ENCODE measurements at regions of chr6 and their contacts with region 1.

Region 1: GRCh38 chr6:45714741-45715507 is 300.7 kb downstream of the CLIC5 start:
- DNase-seq: peak; percentile 73
- H3K4me3 Mint-ChIP-seq: no peak overlapping the region
- H3K27ac Mint-ChIP-seq: no peak overlapping the region
- H3K4me1 Mint-ChIP-seq: peaks cover 35% of the 10 kb centered on the region
- H3K27me3 Mint-ChIP-seq: no peaks in the 10 kb centered on the region

Region 2: GRCh38 chr6:44630125-44631028 is 1084.5 kb before region 1 on chr6:
- CTCF ChIA-PET with region 1: interaction called, 14 read pairs
- intact Hi-C with region 1: no loop called
- DNase-seq: peak; percentile 50
- H3K4me3 Mint-ChIP-seq: no peak overlapping the region
- H3K27ac Mint-ChIP-seq: no peak overlapping the region
- H3K4me1 Mint-ChIP-seq: peaks cover 13% of the 10 kb centered on the region
- H3K27me3 Mint-ChIP-seq: no peaks in the 10 kb centered on the region

Region 3: DNA sequence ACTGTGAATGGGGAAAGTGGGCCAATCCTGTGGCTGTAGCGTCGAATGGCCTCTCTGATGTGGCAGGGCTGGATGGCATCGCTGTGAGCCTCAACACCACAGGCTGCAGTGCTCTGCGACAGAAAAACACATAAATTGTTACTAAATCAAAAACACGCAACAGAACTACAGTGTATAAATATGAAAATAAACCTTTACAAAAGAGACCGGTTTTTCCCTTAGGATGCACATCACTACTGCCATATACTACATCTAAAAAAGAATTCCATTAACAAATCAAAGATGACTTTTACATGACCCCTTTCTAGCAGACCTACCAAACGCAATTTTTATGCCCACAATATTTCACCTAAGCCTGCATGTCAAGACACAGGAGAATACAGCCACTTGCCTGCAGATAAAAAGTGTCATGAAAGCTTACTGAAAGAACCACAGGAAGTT is 782.3 kb before region 1 on chr6:
- CTCF ChIA-PET with region 1: no interaction called
- intact Hi-C with region 1: loop called (anchors 5 kb)
- DNase-seq: peak; percentile 51
- H3K4me3 Mint-ChIP-seq: peak overlapping the region; percentile 78
- H3K27ac Mint-ChIP-seq: peak overlapping the region; percentile 91
- H3K4me1 Mint-ChIP-seq: peaks cover 49% of the 10 kb centered on the region
- H3K27me3 Mint-ChIP-seq: no peaks in the 10 kb centered on the region

Region 4: DNA sequence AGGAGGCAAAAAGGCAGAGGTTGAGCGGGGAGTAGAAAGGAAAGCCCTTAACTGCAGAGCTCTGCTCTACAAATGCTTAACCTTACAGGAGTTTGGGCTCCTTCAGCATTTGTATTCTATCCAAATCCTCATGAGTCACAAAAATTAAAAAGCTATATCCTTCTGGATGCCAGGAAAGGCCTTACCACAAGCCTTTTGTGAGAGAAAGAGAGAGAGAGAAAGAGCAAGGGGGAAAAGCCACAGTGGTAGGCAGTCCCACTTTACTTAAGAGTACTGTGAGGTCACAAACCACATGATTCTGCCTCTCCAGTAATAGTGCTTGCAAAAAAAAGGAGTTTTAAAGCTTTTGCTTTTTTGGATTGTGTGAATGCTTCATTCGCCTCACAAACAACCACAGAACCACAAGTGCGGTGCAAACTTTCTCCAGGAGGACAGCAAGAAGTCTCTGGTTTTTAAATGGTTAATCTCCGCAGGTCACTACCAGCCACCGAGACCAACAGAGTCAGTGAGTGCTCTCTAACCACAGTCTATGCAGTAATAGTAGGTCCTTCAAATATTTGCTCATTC is 386.9 kb before region 1 on chr6 and contains the start of gene RUNX2:
- CTCF ChIA-PET with region 1: no interaction called
- intact Hi-C with region 1: loop called (anchors 5 kb)
- DNase-seq: peak; percentile 34
- H3K4me3 Mint-ChIP-seq: peak within 1 kb of the TSS; percentile 72
- H3K27ac Mint-ChIP-seq: peak within 1 kb of the TSS; percentile 50
- H3K4me1 Mint-ChIP-seq: peaks cover 56% of the 10 kb centered on the region
- H3K27me3 Mint-ChIP-seq: no peaks in the 10 kb centered on the region
- total RNA-seq, gene RUNX2: 3.1 to 3.6 TPM

Region 5: GRCh38 chr6:45479834-45480751 is 234.8 kb before region 1 on chr6:
- CTCF ChIA-PET with region 1: interaction called, 3 read pairs
- intact Hi-C with region 1: loop called (anchors 1 kb)
- DNase-seq: no peak
- H3K4me3 Mint-ChIP-seq: no peak overlapping the region
- H3K27ac Mint-ChIP-seq: no peak overlapping the region
- H3K4me1 Mint-ChIP-seq: peaks cover 15% of the 10 kb centered on the region
- H3K27me3 Mint-ChIP-seq: no peaks in the 10 kb centered on the region

Region 6: DNA sequence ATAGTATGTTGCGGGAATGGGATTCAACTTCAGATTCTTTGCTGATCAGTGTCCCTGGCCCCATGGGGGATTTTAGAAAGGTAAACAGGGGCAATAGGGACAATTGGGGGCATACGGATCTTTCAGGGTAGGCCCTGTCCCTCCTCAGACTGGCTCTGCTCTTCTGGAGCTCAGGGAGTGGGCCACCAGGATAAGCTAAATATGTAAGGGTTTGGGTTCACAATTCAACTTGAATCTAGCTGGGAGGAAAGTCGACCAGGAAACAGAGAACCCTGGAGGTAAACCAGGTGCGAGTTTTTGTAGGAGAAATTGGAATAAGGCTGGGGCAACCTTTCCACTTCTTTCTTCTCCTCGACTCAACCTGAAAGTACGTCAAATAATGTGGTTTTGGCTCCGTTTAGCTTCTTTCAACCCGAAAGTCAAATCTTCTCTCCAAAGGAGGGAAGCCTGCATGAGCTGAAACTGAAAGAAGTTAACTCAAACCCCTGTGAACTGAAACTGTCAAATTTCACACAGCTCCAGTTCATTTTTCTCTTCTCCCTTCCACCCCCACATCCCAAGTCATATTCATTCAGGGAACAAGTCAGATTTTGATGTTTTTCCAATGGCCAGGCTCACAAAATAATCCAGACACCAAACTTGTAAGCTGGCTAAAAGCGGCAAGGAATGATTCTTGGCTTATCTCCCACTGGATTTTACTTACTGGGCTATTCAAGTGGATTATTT is 22.6 kb after region 1 on chr6:
- CTCF ChIA-PET with region 1: interaction called, 3 read pairs
- intact Hi-C with region 1: loop called (anchors 1 kb)
- DNase-seq: peak; percentile 38
- H3K4me3 Mint-ChIP-seq: no peak overlapping the region
- H3K27ac Mint-ChIP-seq: peak overlapping the region; percentile 9
- H3K4me1 Mint-ChIP-seq: peaks cover 32% of the 10 kb centered on the region
- H3K27me3 Mint-ChIP-seq: peaks cover 29% of the 10 kb centered on the region

Region 7: DNA sequence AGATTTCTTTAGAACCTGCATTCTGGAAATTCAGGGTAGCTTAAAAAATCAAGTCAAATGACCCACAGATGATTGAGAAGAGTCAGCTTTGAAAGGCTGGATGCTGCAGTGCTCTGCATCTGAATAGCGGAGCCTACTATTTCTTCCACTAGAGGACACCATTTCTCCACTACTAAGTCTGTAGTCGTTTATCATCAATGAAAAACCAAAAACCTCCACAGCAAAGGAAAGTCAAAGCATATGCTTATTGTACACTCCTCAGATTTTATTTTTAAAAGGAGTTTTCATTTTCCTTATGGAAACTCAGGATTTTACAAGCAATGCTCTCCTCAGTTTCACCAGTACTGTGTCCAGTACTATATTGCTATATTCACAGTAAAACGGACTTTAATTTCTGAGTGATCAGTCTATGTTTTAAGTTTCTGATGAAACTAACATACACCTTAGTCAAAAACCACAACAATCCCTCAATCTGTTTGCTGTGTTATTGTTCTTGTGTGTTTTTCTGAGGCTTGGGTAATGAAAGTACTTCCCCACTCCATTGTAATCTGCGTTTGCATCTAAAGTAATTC is 506.4 kb after region 1 on chr6:
- CTCF ChIA-PET with region 1: no interaction called
- intact Hi-C with region 1: loop called (anchors 1 kb)
- DNase-seq: no peak
- H3K4me3 Mint-ChIP-seq: no peak overlapping the region
- H3K27ac Mint-ChIP-seq: peak overlapping the region; percentile 80
- H3K4me1 Mint-ChIP-seq: peaks cover 30% of the 10 kb centered on the region
- H3K27me3 Mint-ChIP-seq: peaks cover 11% of the 10 kb centered on the region